ENCODE measurements at regions of chr1 and their contacts with region 1.

Region 1: DNA sequence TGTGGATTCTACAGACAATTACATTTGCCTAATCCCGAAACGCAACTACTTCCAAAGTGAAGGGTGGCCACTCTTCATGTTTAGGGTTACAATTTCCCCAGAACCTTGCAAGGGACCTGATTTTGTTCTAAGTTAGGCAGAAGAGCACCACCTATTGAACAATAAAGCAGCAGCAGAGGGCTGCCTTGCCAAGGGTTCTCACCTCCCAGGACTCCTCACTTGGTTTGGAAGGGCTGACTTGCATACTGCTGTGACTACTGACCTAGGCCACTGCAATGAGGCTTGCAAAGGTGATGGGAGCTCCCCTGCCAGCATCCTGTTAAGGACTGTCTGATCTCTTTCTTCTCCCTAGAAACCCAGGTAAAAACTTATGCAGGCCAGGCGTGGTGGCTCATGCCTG is 14.2 kb downstream of the MTOR start:
- DNase-seq: no peak
- ATAC-seq: no peak
- H3K4me3 Mint-ChIP-seq: no peak overlapping the region
- H3K27ac Mint-ChIP-seq: no peak overlapping the region
- H3K4me1 Mint-ChIP-seq: peaks cover 7% of the 10 kb centered on the region
- H3K27me3 Mint-ChIP-seq: no peaks in the 10 kb centered on the region

Region 2: DNA sequence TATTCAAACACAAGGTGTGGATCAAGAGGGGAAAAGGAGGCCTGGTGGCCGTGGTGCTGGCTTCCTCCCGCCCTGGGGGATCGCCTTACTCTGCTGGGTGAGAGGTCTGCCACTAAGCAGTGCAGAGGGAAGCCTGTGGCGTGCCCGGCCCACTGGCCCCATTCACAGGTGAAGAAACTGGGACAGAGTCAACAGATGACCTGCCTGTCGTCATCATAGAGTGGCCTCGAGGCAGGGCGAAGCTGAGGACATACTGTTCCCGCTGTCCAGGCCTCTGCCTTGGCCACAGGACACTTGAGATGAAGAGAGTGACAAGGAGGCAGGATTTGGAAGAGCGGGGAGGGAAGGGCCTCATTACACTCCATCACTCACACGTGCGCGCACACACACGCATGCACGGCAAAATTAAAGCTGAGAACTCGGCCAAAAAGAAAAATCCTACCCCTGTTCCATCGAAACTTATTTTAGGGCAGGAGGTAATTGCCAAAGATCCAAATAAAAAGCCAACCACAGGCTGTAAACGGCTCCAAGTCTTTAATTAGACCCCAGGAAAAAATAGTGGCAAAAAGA is 502.2 kb before region 1 on chr1:
- CTCF ChIA-PET with region 1: no interaction called
- POLR2A ChIA-PET with region 1: no interaction called
- intact Hi-C with region 1: no loop called
- DNase-seq: no peak
- ATAC-seq: no peak
- H3K4me3 Mint-ChIP-seq: no peak overlapping the region
- H3K27ac Mint-ChIP-seq: no peak overlapping the region
- H3K4me1 Mint-ChIP-seq: no peaks in the 10 kb centered on the region
- H3K27me3 Mint-ChIP-seq: no peaks in the 10 kb centered on the region

Region 3: DNA sequence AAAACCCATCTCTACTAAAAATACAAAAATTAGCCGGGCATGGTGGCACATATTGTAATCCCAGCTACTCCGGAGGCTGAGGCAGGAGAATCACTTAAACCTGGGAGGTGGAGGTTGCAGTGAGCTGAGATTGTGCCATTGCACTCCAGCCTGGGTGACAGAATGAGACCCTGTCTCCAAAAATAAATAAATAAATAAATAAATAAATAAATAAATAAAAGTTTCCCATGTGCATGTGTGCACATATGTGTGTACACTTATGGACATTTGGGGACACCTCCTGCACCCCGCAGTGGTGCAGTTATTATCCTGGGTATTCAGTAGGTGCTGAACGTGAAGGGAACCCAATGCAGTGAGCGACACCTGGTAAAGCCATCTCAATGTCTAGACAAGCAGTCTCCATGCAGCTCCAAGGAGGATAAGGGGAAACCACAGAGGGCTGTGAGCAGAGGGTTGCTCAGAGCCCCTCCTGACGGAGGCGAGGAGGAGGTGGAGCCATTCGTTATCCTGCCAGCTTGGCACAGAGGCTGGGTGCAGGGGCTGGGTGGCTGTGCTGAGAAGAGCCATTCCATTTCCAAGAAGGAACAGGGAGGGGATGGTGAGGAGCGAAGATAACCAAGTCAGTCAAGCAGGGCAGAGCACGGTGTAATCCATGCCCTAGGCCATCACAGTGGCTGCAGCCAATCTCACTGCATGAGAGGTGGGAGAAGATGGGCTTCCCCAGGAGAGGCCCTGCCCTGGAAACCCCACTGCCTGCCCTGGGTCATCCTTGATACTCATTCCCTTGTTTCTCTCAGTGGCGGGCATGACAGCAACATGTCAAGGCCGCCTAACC is 50.5 kb after region 1 on chr1:
- CTCF ChIA-PET with region 1: no interaction called
- POLR2A ChIA-PET with region 1: no interaction called
- intact Hi-C with region 1: loop called in 1 of 2 experiments (anchors 5 kb)
- DNase-seq: no peak
- ATAC-seq: peak; percentile 49
- H3K4me3 Mint-ChIP-seq: no peak overlapping the region
- H3K27ac Mint-ChIP-seq: peak overlapping the region; percentile 89
- H3K4me1 Mint-ChIP-seq: peaks cover 44% of the 10 kb centered on the region
- H3K27me3 Mint-ChIP-seq: no peaks in the 10 kb centered on the region

Region 4: GRCh38 chr1:11364170-11364569 is 116.0 kb after region 1 on chr1:
- CTCF ChIA-PET with region 1: interaction called, 6 read pairs
- POLR2A ChIA-PET with region 1: no interaction called
- intact Hi-C with region 1: loop called in 1 of 2 experiments (anchors 10 kb)
- DNase-seq: peak; percentile 49
- ATAC-seq: no peak
- H3K4me3 Mint-ChIP-seq: no peak overlapping the region
- H3K27ac Mint-ChIP-seq: no peak overlapping the region
- H3K4me1 Mint-ChIP-seq: no peaks in the 10 kb centered on the region
- H3K27me3 Mint-ChIP-seq: no peaks in the 10 kb centered on the region